Activated CD8-positive, alpha-beta T cell treated with anti-CD3 and anti-CD28 coated beads for 36 hours (primary cell): ENCODE measurements at regions of chr9 and their contacts with region 1.

Region 1: GRCh38 chr9:91415290-91415689 is 8.3 kb downstream of the NFIL3 start:
- DNase-seq: no peak
- ATAC-seq: peak; percentile 81
- H3K4me3 Mint-ChIP-seq: no peak overlapping the region
- H3K27ac Mint-ChIP-seq: peak overlapping the region; percentile 86
- H3K4me1 Mint-ChIP-seq: peaks cover 73% of the 10 kb centered on the region
- H3K27me3 Mint-ChIP-seq: no peaks in the 10 kb centered on the region
- CTCF ChIP-seq: no peak

Region 2: DNA sequence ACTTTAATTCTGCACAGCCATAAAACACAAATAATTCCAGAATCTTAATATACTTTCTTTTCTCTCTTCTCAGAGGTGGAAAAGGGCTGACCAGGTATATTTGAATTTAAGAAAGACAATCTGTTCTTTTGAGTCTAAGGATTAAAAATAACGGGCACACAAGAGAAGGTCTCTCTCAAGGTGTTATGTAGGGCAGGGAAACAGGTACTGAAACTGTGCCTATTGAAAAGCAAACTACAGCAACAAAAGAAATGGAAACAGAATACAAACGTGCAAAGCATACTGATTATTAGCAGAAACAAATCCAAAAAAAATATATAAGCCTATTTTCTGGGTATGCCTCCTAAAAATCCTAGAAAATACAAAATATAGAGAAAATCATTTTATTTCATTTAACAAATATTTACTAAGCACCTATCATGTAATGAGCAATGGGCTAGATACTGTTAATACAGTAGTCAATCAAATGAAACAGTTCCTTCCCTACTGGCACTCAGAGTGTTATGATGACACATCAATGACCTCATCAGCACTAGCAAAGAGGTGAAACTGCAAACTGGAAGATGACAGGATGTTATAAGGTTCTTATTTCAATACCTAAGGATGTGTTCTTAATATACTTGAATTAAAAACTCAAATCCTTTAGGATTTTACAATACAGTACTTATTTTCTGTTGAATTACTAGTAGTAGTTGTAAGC is 141.3 kb before region 1 on chr9:
- CTCF ChIA-PET with region 1: no interaction called
- POLR2A ChIA-PET with region 1: no interaction called
- intact Hi-C with region 1: no loop called
- DNase-seq: peak; percentile 15
- ATAC-seq: peak; percentile 90
- H3K4me3 Mint-ChIP-seq: no peak overlapping the region
- H3K27ac Mint-ChIP-seq: no peak overlapping the region
- H3K4me1 Mint-ChIP-seq: peaks cover 13% of the 10 kb centered on the region
- H3K27me3 Mint-ChIP-seq: no peaks in the 10 kb centered on the region
- CTCF ChIP-seq: no peak

Region 3: GRCh38 chr9:91395553-91396471 is 19.5 kb before region 1 on chr9:
- CTCF ChIA-PET with region 1: no interaction called
- POLR2A ChIA-PET with region 1: interaction called, 14 read pairs
- intact Hi-C with region 1: no loop called
- DNase-seq: peak; percentile 45
- ATAC-seq: peak; percentile 90
- H3K4me3 Mint-ChIP-seq: peak overlapping the region; percentile 28
- H3K27ac Mint-ChIP-seq: peak overlapping the region; percentile 89
- H3K4me1 Mint-ChIP-seq: peaks cover 16% of the 10 kb centered on the region
- H3K27me3 Mint-ChIP-seq: peaks cover 2% of the 10 kb centered on the region
- CTCF ChIP-seq: no peak

Region 4: DNA sequence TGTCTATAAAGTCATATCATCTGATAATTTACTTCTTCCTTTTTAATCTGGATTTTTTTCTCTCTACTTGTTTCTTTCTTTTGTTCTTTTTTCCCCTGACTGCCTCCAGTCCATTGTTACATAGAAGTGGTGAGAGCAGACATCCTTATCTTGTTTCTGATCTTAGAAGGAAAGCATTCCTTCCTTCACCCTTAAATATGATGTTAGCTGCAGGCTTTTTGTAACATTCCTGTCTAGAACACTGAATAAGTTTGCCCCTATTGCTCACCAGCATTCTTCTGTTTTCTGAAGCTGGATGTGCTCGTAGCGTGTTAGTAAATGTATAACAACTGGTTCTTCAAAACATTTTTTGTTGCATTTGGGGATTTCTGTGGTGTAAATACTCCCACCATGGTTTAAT is 145.0 kb after region 1 on chr9:
- CTCF ChIA-PET with region 1: no interaction called
- POLR2A ChIA-PET with region 1: no interaction called
- intact Hi-C with region 1: no loop called
- DNase-seq: no peak
- ATAC-seq: no peak
- H3K4me3 Mint-ChIP-seq: no peak overlapping the region
- H3K27ac Mint-ChIP-seq: no peak overlapping the region
- H3K4me1 Mint-ChIP-seq: no peaks in the 10 kb centered on the region
- H3K27me3 Mint-ChIP-seq: peaks cover 21% of the 10 kb centered on the region
- CTCF ChIP-seq: no peak